T-cell (primary cell): ENCODE measurements at regions of chr2 and their contacts with region 1.

Region 1: GRCh38 chr2:181924336-181924735 is 32.8 kb downstream of the ITPRID2 start:
- DNase-seq: no peak
- ATAC-seq: no peak
- H3K4me3 ChIP-seq: no peak overlapping the region
- H3K4me3 Mint-ChIP-seq: no peak overlapping the region
- H3K27ac ChIP-seq: no peak overlapping the region
- H3K27ac Mint-ChIP-seq: no peak overlapping the region
- H3K4me1 ChIP-seq: no peaks in the 10 kb centered on the region
- H3K4me1 Mint-ChIP-seq: peaks cover 0 to 4% (median 4%) of the 10 kb centered on the region in 3 donors
- H3K27me3 ChIP-seq: no peaks in the 10 kb centered on the region
- H3K27me3 Mint-ChIP-seq: no peaks in the 10 kb centered on the region

Region 2: DNA sequence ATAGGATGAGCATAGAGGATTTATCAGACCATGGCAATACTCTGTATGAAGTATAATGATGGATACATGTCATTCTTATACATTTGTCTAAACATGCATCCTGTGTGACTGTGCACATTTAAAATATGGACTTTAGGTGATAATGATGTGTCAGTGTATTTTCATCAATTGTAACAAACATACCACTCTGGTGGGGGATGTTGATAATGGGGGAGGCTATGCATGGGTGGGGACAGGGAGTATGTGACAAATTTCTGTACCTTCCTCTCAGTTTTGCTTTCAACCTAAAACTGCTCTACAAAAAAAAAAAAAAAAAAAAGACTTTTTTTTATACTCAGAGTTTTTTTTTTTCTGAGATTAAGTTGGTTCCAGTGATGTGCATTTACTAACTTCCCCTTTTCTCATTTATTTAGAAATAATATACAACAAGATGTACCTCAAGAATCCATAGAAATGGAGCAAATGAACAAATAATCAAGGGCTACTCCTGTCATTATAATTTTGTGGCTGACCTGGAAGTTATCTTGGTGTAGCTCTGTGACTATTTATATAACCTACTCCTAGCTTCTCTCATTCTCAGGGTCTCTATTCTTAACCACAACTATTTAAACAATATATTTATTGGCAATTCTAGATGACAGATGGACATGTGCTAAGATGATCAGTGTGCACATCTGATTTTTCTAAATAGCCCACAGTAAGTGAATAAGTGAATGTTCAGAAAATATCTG is 576.1 kb before region 1 on chr2:
- CTCF ChIA-PET with region 1: no interaction called
- POLR2A ChIA-PET with region 1: no interaction called
- DNase-seq: no peak
- ATAC-seq: no peak
- H3K4me3 ChIP-seq: no peak overlapping the region
- H3K4me3 Mint-ChIP-seq: no peak overlapping the region
- H3K27ac ChIP-seq: no peak overlapping the region
- H3K27ac Mint-ChIP-seq: no peak overlapping the region
- H3K4me1 ChIP-seq: peaks cover 0 to 2% of the 10 kb centered on the region in 2 experiments
- H3K4me1 Mint-ChIP-seq: peaks cover 4 to 12% (median 9%) of the 10 kb centered on the region in 3 donors
- H3K27me3 ChIP-seq: no peaks in the 10 kb centered on the region
- H3K27me3 Mint-ChIP-seq: no peaks in the 10 kb centered on the region

Region 3: DNA sequence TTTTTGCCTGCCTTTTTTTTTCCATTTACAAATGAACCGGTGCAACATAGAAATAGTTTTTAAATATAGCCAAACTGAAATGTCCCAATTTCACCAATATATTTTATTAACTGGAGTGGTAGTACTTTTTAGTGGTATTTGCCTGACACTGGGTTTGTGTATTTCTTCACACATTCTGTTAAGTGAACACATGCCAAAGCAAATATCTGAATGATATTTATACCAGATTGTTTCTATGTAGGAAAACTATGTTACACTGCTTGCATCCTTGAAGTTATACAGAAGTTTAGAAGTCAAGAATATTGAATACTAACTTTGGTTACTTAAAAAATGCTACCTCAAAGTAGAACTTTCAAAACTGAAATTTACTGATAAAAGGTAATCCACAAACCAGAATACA is 52.2 kb before region 1 on chr2:
- CTCF ChIA-PET with region 1: no interaction called
- POLR2A ChIA-PET with region 1: interaction called in 1 of 2 experiments, 18 read pairs
- DNase-seq: no peak
- ATAC-seq: no peak
- H3K4me3 ChIP-seq: no peak overlapping the region
- H3K4me3 Mint-ChIP-seq: no peak overlapping the region
- H3K27ac ChIP-seq: no peak overlapping the region
- H3K27ac Mint-ChIP-seq: no peak overlapping the region
- H3K4me1 ChIP-seq: no peaks in the 10 kb centered on the region
- H3K4me1 Mint-ChIP-seq: no peaks in the 10 kb centered on the region
- H3K27me3 ChIP-seq: no peaks in the 10 kb centered on the region
- H3K27me3 Mint-ChIP-seq: no peaks in the 10 kb centered on the region